Thyroid gland (tissue), 4 donors: ENCODE measurements at regions of chr4 and their contacts with region 1.

Region 1: DNA sequence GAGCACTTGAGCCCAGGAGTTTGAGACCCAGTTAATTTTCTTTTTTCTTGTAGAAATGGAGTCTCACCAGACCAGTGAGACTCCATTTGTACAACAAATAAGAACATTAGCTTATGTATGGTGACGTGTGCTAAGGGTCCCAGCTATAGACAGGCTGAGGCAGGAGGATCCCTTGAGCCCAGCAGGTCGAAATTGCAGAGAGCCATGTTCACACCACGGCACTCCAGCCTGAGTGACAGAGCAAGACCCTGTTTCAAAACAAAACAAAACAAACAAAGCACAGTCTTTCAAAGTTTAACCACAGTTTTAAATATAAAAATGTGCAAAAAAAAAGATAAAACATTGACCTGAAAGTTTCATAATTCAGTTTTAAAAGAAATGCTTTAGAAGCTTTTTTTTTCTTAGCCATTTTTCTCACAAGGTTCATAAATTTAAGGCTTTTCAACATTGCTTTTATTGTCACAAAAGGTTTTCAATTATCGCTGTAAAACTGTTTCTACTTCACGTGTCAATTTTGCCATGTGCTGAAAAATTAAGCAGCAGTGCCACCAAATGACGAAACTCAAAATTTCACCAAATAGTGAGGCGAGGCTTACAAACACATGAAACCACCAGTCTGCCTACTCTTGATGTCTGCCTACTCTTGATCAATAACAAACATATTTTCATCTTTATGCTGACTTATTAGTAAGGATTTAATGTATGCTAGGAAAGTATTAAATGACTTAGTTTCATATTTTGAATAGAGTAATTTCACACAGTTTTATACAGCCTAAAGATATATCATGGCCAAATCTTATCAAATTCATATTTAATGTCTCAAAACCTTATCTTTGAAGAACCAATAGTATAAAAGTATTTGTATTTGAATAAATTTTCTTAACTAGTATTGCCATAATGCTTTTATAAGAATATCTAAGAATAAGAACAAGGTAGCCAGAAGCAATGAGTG is 126.3 kb downstream of the NEK1 start:
- DNase-seq: peak; percentile 29 to 37
- H3K4me3 ChIP-seq: no peak overlapping the region
- H3K27ac ChIP-seq: no peak overlapping the region
- H3K4me1 ChIP-seq: peaks cover 3 to 4% of the 10 kb centered on the region in 2 donors
- H3K27me3 ChIP-seq: no peaks in the 10 kb centered on the region
- CTCF ChIP-seq: peak in 5 of 6 experiments; percentile 30 to 76 (median 47)
- POLR2A ChIP-seq: no peak

Region 2: DNA sequence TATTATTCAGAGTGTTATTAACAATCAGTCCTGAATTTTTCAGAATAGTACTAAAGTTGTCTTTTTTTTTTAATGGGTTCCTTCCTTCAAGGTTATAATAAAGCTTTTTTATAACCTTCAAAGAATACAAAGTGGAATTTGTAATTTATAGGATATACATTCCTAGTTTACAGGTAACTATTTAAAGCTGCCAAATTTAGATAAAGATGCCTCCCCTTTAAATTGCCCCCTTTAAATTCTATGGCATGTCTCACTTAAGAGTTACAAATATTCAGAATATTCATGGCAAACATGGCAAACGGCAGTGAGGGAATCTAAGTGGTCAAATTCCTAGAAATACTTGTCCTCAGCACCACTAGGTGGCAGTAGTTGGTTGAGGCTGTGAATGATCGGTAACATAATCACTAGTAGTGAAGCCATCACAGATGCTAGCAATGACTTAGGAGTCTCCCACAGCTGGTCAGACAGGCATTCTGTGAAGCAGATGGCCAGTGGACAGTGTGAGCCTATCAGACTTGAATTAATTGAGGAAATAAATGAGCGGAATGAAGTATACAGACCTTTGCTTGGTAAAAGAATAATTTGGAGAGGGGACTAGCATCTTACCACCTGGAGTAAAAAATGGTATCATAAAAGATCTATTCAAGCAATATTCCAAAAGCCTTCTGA is 562.4 kb before region 1 on chr4:
- intact Hi-C with region 1: loop called (anchors 5 kb)
- DNase-seq: peak; percentile 54 to 62
- H3K4me3 ChIP-seq: no peak overlapping the region
- H3K27ac ChIP-seq: peak overlapping the region in 1 of 3 donors; percentile 20
- H3K4me1 ChIP-seq: no peaks in the 10 kb centered on the region
- H3K27me3 ChIP-seq: no peaks in the 10 kb centered on the region
- CTCF ChIP-seq: peak; percentile 40 to 85 (median 77)
- POLR2A ChIP-seq: no peak

Region 3: DNA sequence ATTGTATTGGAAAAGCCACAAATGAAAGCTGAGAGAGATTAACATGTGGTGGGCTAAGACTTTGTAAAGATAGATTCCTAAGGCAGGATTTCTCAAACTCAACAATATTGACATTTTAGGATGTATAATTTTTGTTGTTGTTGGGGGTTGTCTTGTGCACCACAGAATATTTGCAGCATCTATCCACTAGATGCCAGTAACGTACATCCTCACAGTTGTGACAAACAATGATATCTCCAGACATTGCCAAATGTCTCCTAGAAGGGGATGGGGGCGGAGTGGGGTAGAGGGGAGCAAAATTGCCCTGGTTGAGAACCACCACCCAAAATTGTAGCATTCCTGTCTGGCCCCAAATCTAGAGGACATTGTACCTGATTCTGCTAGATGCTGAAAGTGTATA is 461.3 kb before region 1 on chr4:
- intact Hi-C with region 1: loop called (anchors 5 kb)
- DNase-seq: no peak
- H3K4me3 ChIP-seq: no peak overlapping the region
- H3K27ac ChIP-seq: peak overlapping the region in 1 of 3 donors; percentile 15
- H3K4me1 ChIP-seq: no peaks in the 10 kb centered on the region
- H3K27me3 ChIP-seq: no peaks in the 10 kb centered on the region
- CTCF ChIP-seq: peak in 5 of 6 experiments; percentile 11 to 74 (median 64)
- POLR2A ChIP-seq: no peak

Region 4: DNA sequence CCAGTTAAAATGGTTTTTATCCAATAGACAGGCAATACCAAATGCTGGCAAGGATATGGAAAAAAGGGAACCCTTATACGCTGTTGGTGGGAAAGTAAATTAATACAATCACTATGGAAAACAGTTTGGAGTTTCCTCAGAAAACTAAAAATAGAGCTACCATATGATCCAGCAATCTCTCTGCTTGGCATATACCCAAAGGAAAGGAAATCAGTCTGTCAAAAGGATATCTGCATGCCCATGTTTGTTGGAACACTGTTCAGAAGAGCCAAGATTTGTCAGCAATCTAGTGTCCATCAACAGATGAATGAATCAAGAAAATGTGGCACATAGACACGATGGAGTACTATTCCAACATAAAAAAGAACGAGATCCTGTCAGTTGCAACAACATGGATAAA is 124.3 kb before region 1 on chr4:
- intact Hi-C with region 1: no loop called
- DNase-seq: no peak
- H3K4me3 ChIP-seq: no peak overlapping the region
- H3K27ac ChIP-seq: no peak overlapping the region
- H3K4me1 ChIP-seq: no peaks in the 10 kb centered on the region
- H3K27me3 ChIP-seq: no peaks in the 10 kb centered on the region
- CTCF ChIP-seq: no peak
- POLR2A ChIP-seq: no peak